CD4-positive, alpha-beta T cell (primary cell): ENCODE measurements at regions of chr5 and their contacts with region 1.

Region 1: GRCh38 chr5:180071531-180072255 is at the start of gene RNF130:
- DNase-seq: peak; percentile 61 to 92 (median 81)
- ATAC-seq: peak; percentile 66
- H3K4me3 ChIP-seq: peak within 1 kb of the TSS; percentile 65
- H3K4me3 Mint-ChIP-seq: peak within 1 kb of the TSS; percentile 89
- H3K27ac ChIP-seq: peak within 1 kb of the TSS in 1 of 2 donors; percentile 62
- H3K27ac Mint-ChIP-seq: peak within 1 kb of the TSS; percentile 80
- H3K4me1 ChIP-seq: peaks cover 22% of the 10 kb centered on the region
- H3K4me1 Mint-ChIP-seq: peaks cover 38% of the 10 kb centered on the region
- H3K27me3 ChIP-seq: no peaks in the 10 kb centered on the region
- H3K27me3 Mint-ChIP-seq: no peaks in the 10 kb centered on the region
- CTCF ChIP-seq: no peak
- total RNA-seq, gene RNF130: 18.2 to 19.1 TPM

Region 2: GRCh38 chr5:178232124-178232919 is 1839.4 kb before region 1 on chr5 and contains the start of gene PHYKPL:
- CTCF ChIA-PET with region 1: interaction called, 3 read pairs
- POLR2A ChIA-PET with region 1: no interaction called
- intact Hi-C with region 1: loop called in 1 of 2 experiments (anchors 10 kb)
- DNase-seq: peak; percentile 44 to 83 (median 64)
- ATAC-seq: peak; percentile 60
- H3K4me3 ChIP-seq: peak within 1 kb of the TSS; percentile 94
- H3K4me3 Mint-ChIP-seq: peak within 1 kb of the TSS; percentile 90
- H3K27ac ChIP-seq: peak within 1 kb of the TSS; percentile 81 to 85
- H3K27ac Mint-ChIP-seq: peak within 1 kb of the TSS; percentile 84
- H3K4me1 ChIP-seq: peaks cover 85% of the 10 kb centered on the region
- H3K4me1 Mint-ChIP-seq: peaks cover 54% of the 10 kb centered on the region
- H3K27me3 ChIP-seq: no peaks in the 10 kb centered on the region
- H3K27me3 Mint-ChIP-seq: no peaks in the 10 kb centered on the region
- CTCF ChIP-seq: no peak
- total RNA-seq, gene PHYKPL: 90.9 to 92.8 TPM

Region 3: DNA sequence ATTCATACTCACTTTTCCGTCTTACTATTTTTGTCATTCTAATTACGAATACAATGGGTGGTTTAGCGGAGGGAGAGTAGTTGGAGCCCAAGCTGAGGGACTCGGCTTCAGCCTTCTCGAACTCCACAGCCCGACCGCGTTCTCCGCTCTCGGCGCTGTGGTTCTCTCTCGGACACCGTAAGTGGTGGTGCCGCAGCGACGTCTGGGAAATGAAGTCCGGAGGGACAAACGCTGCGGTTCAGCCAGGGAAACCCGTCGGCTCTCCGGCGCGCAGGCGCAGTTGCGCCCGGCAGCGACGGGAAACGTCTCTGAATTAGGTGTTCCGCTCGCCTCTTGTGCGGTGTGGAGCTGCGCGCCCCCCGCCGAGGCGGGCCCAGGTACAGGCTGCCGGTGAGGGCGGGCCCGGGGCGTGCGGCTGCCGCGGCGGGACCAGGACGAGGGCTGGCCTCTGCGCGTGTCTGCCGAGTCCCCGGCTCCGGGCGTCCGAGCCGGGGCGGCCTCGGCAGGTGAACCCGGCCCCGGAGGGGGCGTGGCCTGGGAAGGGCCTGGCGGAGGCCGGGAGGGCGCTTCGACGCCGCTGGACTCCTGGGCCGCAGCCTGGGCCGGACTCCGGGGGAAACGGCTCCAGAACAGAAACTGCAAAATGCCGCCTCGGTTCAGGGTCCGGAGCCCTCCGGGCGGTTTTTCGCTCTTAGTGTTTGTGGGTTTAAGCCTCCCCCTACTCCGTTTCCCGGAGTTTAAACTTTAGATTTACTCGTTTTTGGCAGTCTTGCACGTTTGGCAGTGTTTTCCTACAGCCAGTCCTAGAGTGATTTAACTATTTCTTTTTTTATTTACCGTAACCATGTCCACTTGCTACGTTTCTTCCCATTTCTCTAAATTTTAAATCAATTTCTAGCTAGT is 1047.9 kb before region 1 on chr5 and contains the start of gene ZNF879:
- CTCF ChIA-PET with region 1: no interaction called
- POLR2A ChIA-PET with region 1: no interaction called
- intact Hi-C with region 1: loop called in 1 of 2 experiments (anchors 10 kb)
- DNase-seq: peak; percentile 90 to 97 (median 94)
- ATAC-seq: peak; percentile 94
- H3K4me3 ChIP-seq: peak within 1 kb of the TSS; percentile 64
- H3K4me3 Mint-ChIP-seq: peak within 1 kb of the TSS; percentile 95
- H3K27ac ChIP-seq: no peak within 1 kb of the TSS
- H3K27ac Mint-ChIP-seq: peak within 1 kb of the TSS; percentile 83
- H3K4me1 ChIP-seq: peaks cover 22% of the 10 kb centered on the region
- H3K4me1 Mint-ChIP-seq: peaks cover 16% of the 10 kb centered on the region
- H3K27me3 ChIP-seq: no peaks in the 10 kb centered on the region
- H3K27me3 Mint-ChIP-seq: peaks cover 4% of the 10 kb centered on the region
- CTCF ChIP-seq: no peak
- total RNA-seq, gene ZNF879: 4.9 to 5.1 TPM

Region 4: GRCh38 chr5:179550511-179551230 is 521.0 kb before region 1 on chr5 and contains the start of gene RUFY1:
- CTCF ChIA-PET with region 1: no interaction called
- POLR2A ChIA-PET with region 1: no interaction called
- intact Hi-C with region 1: loop called in 1 of 2 experiments (anchors 5 kb)
- DNase-seq: peak; percentile 63 to 91 (median 79)
- ATAC-seq: peak; percentile 76
- H3K4me3 ChIP-seq: peak within 1 kb of the TSS; percentile 91
- H3K4me3 Mint-ChIP-seq: peak within 1 kb of the TSS; percentile 99
- H3K27ac ChIP-seq: peak within 1 kb of the TSS; percentile 74 to 77
- H3K27ac Mint-ChIP-seq: peak within 1 kb of the TSS; percentile 97
- H3K4me1 ChIP-seq: peaks cover 37% of the 10 kb centered on the region
- H3K4me1 Mint-ChIP-seq: peaks cover 37% of the 10 kb centered on the region
- H3K27me3 ChIP-seq: no peaks in the 10 kb centered on the region
- H3K27me3 Mint-ChIP-seq: no peaks in the 10 kb centered on the region
- CTCF ChIP-seq: no peak
- total RNA-seq, gene RUFY1: 19.5 to 21.8 TPM

Region 5: GRCh38 chr5:179907570-179908324 is 163.9 kb before region 1 on chr5 and contains the start of gene TBC1D9B:
- CTCF ChIA-PET with region 1: no interaction called
- POLR2A ChIA-PET with region 1: no interaction called
- intact Hi-C with region 1: loop called in 1 of 2 experiments (anchors 5 kb)
- DNase-seq: peak; percentile 45 to 93 (median 64)
- ATAC-seq: peak; percentile 90
- H3K4me3 ChIP-seq: peak within 1 kb of the TSS; percentile 60
- H3K4me3 Mint-ChIP-seq: peak within 1 kb of the TSS; percentile 95
- H3K27ac ChIP-seq: no peak within 1 kb of the TSS
- H3K27ac Mint-ChIP-seq: peak within 1 kb of the TSS; percentile 82
- H3K4me1 ChIP-seq: peaks cover 25% of the 10 kb centered on the region
- H3K4me1 Mint-ChIP-seq: peaks cover 23% of the 10 kb centered on the region
- H3K27me3 ChIP-seq: no peaks in the 10 kb centered on the region
- H3K27me3 Mint-ChIP-seq: no peaks in the 10 kb centered on the region
- CTCF ChIP-seq: peak; percentile 17
- total RNA-seq, gene TBC1D9B: 67.5 to 71.8 TPM

Region 6: GRCh38 chr5:180084688-180085561 is 13.2 kb after region 1 on chr5:
- CTCF ChIA-PET with region 1: no interaction called
- POLR2A ChIA-PET with region 1: interaction called, 3 read pairs
- intact Hi-C with region 1: loop called (anchors 1 to 2 kb)
- DNase-seq: no peak
- ATAC-seq: peak; percentile 40
- H3K4me3 ChIP-seq: no peak overlapping the region
- H3K4me3 Mint-ChIP-seq: no peak overlapping the region
- H3K27ac ChIP-seq: no peak overlapping the region
- H3K27ac Mint-ChIP-seq: peak overlapping the region; percentile 79
- H3K4me1 ChIP-seq: peaks cover 12% of the 10 kb centered on the region
- H3K4me1 Mint-ChIP-seq: peaks cover 24% of the 10 kb centered on the region
- H3K27me3 ChIP-seq: peaks cover 18% of the 10 kb centered on the region in 2 experiments
- H3K27me3 Mint-ChIP-seq: peaks cover 46% of the 10 kb centered on the region
- CTCF ChIP-seq: no peak

Region 7: GRCh38 chr5:180090098-180090768 is 18.5 kb after region 1 on chr5:
- CTCF ChIA-PET with region 1: no interaction called
- POLR2A ChIA-PET with region 1: interaction called, 3 read pairs
- intact Hi-C with region 1: loop called (anchors 1 to 2 kb)
- DNase-seq: peak; percentile 64 to 91 (median 78)
- ATAC-seq: peak; percentile 58
- H3K4me3 ChIP-seq: peak overlapping the region; percentile 64
- H3K4me3 Mint-ChIP-seq: peak overlapping the region; percentile 81
- H3K27ac ChIP-seq: no peak overlapping the region
- H3K27ac Mint-ChIP-seq: peak overlapping the region; percentile 88
- H3K4me1 ChIP-seq: peaks cover 21% of the 10 kb centered on the region
- H3K4me1 Mint-ChIP-seq: peaks cover 19% of the 10 kb centered on the region
- H3K27me3 ChIP-seq: no peaks in the 10 kb centered on the region
- H3K27me3 Mint-ChIP-seq: peaks cover 3% of the 10 kb centered on the region
- CTCF ChIP-seq: peak; percentile 83

Region 8: GRCh38 chr5:180117000-180117725 is 45.5 kb after region 1 on chr5:
- CTCF ChIA-PET with region 1: no interaction called
- POLR2A ChIA-PET with region 1: no interaction called
- intact Hi-C with region 1: no loop called
- DNase-seq: peak in 1 of 14 experiments; percentile 26
- ATAC-seq: no peak
- H3K4me3 ChIP-seq: no peak overlapping the region
- H3K4me3 Mint-ChIP-seq: no peak overlapping the region
- H3K27ac ChIP-seq: no peak overlapping the region
- H3K27ac Mint-ChIP-seq: no peak overlapping the region
- H3K4me1 ChIP-seq: no peaks in the 10 kb centered on the region
- H3K4me1 Mint-ChIP-seq: no peaks in the 10 kb centered on the region
- H3K27me3 ChIP-seq: no peaks in the 10 kb centered on the region
- H3K27me3 Mint-ChIP-seq: peaks cover 4% of the 10 kb centered on the region
- CTCF ChIP-seq: no peak